GM18951 (cell line): ENCODE measurements at regions of chr16 and their contacts with region 1.

Region 1: DNA sequence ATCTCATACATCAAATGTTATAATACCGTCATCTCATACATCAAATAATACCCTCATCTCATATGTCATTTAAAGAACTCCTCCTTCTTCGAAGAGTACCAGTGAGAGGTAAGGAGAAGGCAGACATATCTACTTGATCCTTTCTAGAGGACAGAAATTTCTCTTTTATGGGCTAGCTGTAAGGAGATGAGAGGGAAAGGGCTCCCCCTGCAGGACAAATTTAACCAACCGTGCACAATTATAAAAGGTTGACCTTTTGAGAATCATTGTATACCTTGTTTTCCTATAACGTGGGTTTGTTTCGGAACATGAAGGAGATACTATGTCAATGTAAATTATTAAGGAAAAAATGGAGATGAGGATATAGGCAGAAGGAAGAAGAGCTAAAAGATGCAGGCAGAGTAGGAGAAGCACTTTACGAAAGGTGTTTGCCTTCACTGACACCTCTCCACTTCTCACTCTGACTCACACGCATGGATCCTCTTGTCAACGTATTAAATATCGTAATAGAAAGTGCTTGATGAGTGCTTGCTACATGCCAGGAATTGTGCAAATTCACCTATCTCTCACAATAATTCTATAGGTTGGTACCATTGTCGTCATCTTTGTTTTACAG is 465.9 kb upstream of the ERCC4 start:
- POLR2A ChIP-seq: no peak

Region 2: GRCh38 chr16:12896562-12896961 is 557.5 kb before region 1 on chr16:
- in situ Hi-C with region 1: loop called (anchors 10 kb)
- POLR2A ChIP-seq: no peak

Region 3: DNA sequence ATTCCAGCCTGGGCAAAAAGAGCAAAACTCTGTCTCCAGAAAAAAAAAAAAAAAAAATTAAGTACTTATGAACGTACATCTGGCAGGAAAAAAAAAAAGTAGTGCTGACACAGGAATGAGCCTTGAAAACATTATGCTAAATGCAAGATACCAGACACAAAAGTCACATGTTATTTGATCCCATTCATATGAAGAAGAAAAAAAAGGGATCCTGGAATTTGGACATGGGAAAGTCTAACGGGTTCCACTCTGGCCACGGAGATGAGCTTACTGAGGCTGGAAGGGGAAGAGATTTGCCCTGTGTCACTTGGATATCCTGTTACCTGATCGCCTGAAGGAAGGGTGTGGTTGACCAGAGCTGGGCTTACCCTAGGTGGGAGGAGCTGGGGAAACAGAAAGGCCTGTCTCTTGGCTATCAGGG is 924.1 kb after region 1 on chr16:
- in situ Hi-C with region 1: no loop called
- POLR2A ChIP-seq: no peak